MCF 10A (cell line): ENCODE measurements at regions of chr11 and their contacts with region 1.

Region 1: GRCh38 chr11:101860696-101861427 is 53.9 kb upstream of the CEP126 start:
- DNase-seq: peak; percentile 67
- H3K4me3 Mint-ChIP-seq: no peak overlapping the region
- H3K27ac Mint-ChIP-seq: no peak overlapping the region
- H3K4me1 Mint-ChIP-seq: peaks cover 13% of the 10 kb centered on the region
- H3K27me3 Mint-ChIP-seq: no peaks in the 10 kb centered on the region
- CTCF ChIP-seq: peak; percentile 61

Region 2: GRCh38 chr11:101254037-101254436 is 606.8 kb before region 1 on chr11:
- CTCF ChIA-PET with region 1: no interaction called
- POLR2A ChIA-PET with region 1: no interaction called
- intact Hi-C with region 1: no loop called
- DNase-seq: no peak
- H3K4me3 Mint-ChIP-seq: no peak overlapping the region
- H3K27ac Mint-ChIP-seq: no peak overlapping the region
- H3K4me1 Mint-ChIP-seq: no peaks in the 10 kb centered on the region
- H3K27me3 Mint-ChIP-seq: no peaks in the 10 kb centered on the region
- CTCF ChIP-seq: no peak

Region 3: DNA sequence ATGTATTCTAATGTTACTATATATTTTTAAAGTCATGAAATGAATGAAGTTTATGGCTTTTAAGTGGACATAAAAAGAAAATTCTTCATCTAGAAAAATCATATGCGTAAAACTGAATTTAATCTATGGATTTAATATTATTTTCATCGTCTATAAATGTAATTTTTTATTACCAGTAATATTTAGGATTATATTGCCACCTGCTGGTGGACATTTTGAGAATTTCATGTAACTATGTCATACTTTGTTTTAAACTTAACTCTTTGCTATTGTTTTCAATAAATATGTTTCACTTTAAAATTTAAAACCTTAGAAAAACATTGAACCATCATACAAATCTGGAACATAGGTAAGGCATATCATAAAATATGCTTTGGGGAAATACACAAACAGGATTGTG is 12.6 kb before region 1 on chr11:
- CTCF ChIA-PET with region 1: interaction called, 13 read pairs
- POLR2A ChIA-PET with region 1: no interaction called
- intact Hi-C with region 1: no loop called
- DNase-seq: peak; percentile 43
- H3K4me3 Mint-ChIP-seq: no peak overlapping the region
- H3K27ac Mint-ChIP-seq: no peak overlapping the region
- H3K4me1 Mint-ChIP-seq: no peaks in the 10 kb centered on the region
- H3K27me3 Mint-ChIP-seq: no peaks in the 10 kb centered on the region
- CTCF ChIP-seq: peak; percentile 47

Region 4: GRCh38 chr11:101894505-101894904 is 33.6 kb after region 1 on chr11:
- CTCF ChIA-PET with region 1: interaction called, 10 read pairs
- POLR2A ChIA-PET with region 1: no interaction called
- intact Hi-C with region 1: no loop called
- DNase-seq: no peak
- H3K4me3 Mint-ChIP-seq: no peak overlapping the region
- H3K27ac Mint-ChIP-seq: no peak overlapping the region
- H3K4me1 Mint-ChIP-seq: no peaks in the 10 kb centered on the region
- H3K27me3 Mint-ChIP-seq: no peaks in the 10 kb centered on the region
- CTCF ChIP-seq: no peak

Region 5: GRCh38 chr11:101914738-101915426 is 54.0 kb after region 1 on chr11 and contains the start of gene CEP126:
- CTCF ChIA-PET with region 1: interaction called, 10 read pairs
- POLR2A ChIA-PET with region 1: interaction called, 12 read pairs
- intact Hi-C with region 1: loop called (anchors 5 kb)
- DNase-seq: peak; percentile 92
- H3K4me3 Mint-ChIP-seq: peak within 1 kb of the TSS; percentile 96
- H3K27ac Mint-ChIP-seq: peak within 1 kb of the TSS; percentile 98
- H3K4me1 Mint-ChIP-seq: peaks cover 33% of the 10 kb centered on the region
- H3K27me3 Mint-ChIP-seq: no peaks in the 10 kb centered on the region
- CTCF ChIP-seq: peak; percentile 27
- total RNA-seq, gene CEP126: 3.1 and 4.3 TPM in 2 replicates

Region 6: DNA sequence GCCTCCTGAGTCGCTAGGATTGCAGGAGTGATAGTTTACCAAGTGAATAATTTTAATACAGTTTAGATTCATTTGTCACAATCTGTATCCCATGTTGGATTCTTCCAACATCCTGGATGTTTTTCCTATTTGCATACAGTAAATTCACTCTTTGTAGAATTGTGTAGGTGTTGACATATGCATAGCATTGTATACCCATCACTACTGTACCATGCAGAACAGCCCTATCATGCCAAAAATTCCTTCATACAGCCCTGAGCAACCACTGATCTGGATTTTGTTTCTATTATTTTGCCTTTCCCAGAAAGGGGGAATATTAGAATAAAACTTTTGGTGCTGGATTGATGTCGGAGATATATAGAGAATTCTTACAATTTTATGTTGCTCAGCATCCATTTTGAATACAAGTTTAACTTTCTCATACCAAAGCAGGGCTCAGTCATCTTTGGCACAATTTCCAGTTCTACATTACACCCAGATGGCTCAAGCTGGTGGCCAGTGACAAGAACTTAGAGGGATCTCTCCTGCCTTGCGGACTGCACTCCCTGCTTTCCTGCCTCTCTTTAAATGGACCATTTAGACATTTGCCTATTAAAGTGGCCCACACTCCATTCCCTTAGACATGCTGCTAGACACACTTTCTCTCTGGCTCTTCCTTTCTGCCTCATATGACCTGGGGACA is 140.9 kb after region 1 on chr11:
- CTCF ChIA-PET with region 1: interaction called, 372 read pairs
- POLR2A ChIA-PET with region 1: interaction called, 35 read pairs
- intact Hi-C with region 1: no loop called
- DNase-seq: no peak
- H3K4me3 Mint-ChIP-seq: no peak overlapping the region
- H3K27ac Mint-ChIP-seq: no peak overlapping the region
- H3K4me1 Mint-ChIP-seq: peaks cover 7% of the 10 kb centered on the region
- H3K27me3 Mint-ChIP-seq: no peaks in the 10 kb centered on the region
- CTCF ChIP-seq: no peak

Region 7: DNA sequence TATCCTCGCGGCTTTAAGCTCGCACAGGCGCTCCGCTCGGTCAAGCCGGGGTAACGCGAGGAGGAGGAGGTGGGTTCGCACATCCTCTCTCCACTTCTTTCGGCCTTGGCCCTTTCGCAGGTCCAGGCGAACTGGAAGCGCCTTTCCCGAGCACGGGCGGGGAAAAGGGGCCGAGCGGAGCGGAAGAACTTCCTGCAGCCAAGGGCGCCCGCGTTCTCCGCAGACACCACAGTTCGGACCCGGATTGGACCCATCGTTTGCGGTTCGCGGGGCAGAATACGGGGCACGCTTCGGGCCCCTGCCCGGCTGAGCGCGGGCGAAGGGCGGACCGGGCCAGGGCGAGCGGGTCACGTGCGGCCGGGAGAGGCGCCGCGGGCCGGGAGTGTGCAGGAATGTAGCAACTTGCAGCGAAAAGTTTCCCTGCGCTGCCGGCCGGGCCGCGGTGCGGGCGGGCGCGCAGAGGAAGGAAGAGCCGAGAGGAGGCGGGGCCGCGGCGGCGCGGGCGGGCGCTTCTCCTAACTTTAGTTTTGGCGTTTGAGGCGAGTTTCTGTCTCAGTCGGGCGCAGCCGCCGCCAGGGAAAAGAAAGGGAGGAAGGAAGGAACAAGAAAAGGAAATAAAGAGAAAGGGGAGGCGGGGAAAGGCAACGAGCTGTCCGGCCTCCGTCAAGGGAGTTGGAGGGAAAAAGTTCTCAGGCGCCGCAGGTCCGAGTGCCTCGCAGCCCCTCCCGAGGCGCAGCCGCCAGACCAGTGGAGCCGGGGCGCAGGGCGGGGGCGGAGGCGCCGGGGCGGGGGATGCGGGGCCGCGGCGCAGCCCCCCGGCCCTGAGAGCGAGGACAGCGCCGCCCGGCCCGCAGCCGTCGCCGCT is 249.3 kb after region 1 on chr11 and contains the start of gene YAP1:
- CTCF ChIA-PET with region 1: interaction called, 3 read pairs
- POLR2A ChIA-PET with region 1: no interaction called
- intact Hi-C with region 1: loop called (anchors 5 kb)
- DNase-seq: peak; percentile 92
- H3K4me3 Mint-ChIP-seq: peak within 1 kb of the TSS; percentile 92
- H3K27ac Mint-ChIP-seq: peak within 1 kb of the TSS; percentile 98
- H3K4me1 Mint-ChIP-seq: peaks cover 15% of the 10 kb centered on the region
- H3K27me3 Mint-ChIP-seq: no peaks in the 10 kb centered on the region
- CTCF ChIP-seq: no peak
- total RNA-seq, gene YAP1: 139 and 158 TPM in 2 replicates

Region 8: GRCh38 chr11:102287964-102288724 is 427.3 kb after region 1 on chr11:
- CTCF ChIA-PET with region 1: interaction called, 6 read pairs
- POLR2A ChIA-PET with region 1: no interaction called
- intact Hi-C with region 1: loop called (anchors 5 kb)
- DNase-seq: peak; percentile 80
- H3K4me3 Mint-ChIP-seq: no peak overlapping the region
- H3K27ac Mint-ChIP-seq: no peak overlapping the region
- H3K4me1 Mint-ChIP-seq: peaks cover 19% of the 10 kb centered on the region
- H3K27me3 Mint-ChIP-seq: no peaks in the 10 kb centered on the region
- CTCF ChIP-seq: peak; percentile 63